ENCODE measurements at regions of chr19 and their contacts with region 1.

Region 1: DNA sequence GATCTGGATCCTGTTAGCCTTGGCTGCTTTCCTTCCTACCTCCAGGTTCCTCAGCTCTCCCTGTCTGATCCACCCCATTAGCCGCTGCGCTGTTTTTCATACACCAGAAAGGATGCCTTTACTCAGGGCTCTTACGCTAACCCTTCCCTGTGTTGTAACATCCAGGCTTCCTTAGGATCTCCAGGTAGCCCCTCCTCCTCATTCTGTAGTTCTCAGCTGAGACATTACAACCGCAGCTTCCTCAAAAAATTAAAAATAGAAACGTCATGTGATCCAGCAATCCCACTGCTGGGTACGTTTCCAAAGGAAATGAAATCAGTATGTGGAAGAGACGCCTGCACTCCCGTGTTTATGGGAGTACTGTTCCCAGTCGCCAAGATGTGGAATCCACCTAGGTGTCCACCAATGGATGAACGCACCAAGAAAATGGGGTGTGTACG is 18.4 kb upstream of the MYADM start:
- DNase-seq: peak in 1 of 2 donors; percentile 53
- ATAC-seq: peak; percentile 72 to 90 (median 80)
- H3K4me3 ChIP-seq: peak overlapping the region in 1 of 10 donors; percentile 6
- H3K27ac ChIP-seq: peak overlapping the region in 9 of 10 donors; percentile 29 to 81 (median 73)
- H3K4me1 ChIP-seq: peaks cover 0 to 60% (median 6%) of the 10 kb centered on the region in 9 donors
- H3K27me3 ChIP-seq: peaks cover 0 to 6% (median 0%) of the 10 kb centered on the region in 7 donors
- CTCF ChIP-seq: no peak

Region 2: DNA sequence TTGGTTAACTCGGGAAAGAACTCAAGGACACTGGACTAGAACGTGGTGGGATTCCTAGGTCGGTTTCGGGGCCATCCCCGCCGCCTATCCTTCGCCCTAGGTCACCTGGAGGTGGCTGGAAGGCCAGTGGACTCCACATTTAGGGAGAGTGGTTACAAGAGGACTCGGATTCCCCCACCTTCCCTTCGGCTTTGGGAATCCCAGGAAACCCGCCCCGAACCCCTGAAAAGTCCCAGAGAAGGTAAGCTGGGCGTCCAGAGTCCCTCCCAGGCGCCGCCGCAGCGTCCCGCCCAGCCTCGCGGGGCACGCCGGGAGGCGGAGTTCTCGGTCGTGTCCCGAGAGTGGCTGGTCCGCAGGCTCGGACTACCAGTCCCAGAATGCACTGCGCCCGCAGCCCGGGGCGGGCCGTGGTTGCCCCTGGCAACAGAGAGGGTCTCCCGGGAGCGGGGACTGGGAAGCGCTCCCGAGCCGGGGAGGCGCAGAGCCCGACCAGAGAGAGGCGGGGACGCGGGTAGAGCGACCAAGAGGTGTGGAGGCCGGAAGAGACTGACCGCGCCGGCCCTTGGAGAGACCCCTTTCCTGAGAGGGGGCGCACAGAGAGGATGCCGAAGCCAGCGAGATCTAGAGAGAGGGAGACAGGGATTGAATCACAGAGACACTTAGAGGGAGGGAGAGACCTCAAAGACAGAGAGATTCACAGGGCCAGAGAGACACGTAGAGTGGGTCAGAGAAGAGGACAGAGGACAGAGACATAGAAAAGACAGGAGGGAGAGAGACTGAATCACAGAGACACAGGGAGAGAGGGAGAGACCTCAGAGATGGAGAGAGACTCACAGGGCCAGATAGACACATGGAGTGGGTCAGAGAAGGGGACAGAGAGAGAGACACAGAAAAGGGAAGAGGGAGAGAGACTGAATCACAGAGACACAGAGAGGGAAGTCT is 30.2 kb after region 1 on chr19:
- intact Hi-C with region 1: loop called in 2 of 10 experiments (anchors 5 kb)
- DNase-seq: peak; percentile 95 to 96
- ATAC-seq: peak; percentile 96 to 100 (median 98)
- H3K4me3 ChIP-seq: peak overlapping the region; percentile 40 to 71 (median 60)
- H3K27ac ChIP-seq: peak overlapping the region in 6 of 10 donors; percentile 16 to 55 (median 22)
- H3K4me1 ChIP-seq: peaks cover 5 to 59% (median 22%) of the 10 kb centered on the region in 9 donors
- H3K27me3 ChIP-seq: peaks cover 15 to 49% (median 44%) of the 10 kb centered on the region in 7 donors
- CTCF ChIP-seq: no peak

Region 3: GRCh38 chr19:53906211-53907192 is 57.2 kb after region 1 on chr19:
- intact Hi-C with region 1: loop called in 2 of 10 experiments (anchors 10 kb)
- DNase-seq: peak; percentile 18 to 59
- ATAC-seq: peak in 7 of 8 donors; percentile 44 to 65 (median 58)
- H3K4me3 ChIP-seq: no peak overlapping the region
- H3K27ac ChIP-seq: no peak overlapping the region
- H3K4me1 ChIP-seq: peaks cover 0 to 26% (median 19%) of the 10 kb centered on the region in 9 donors
- H3K27me3 ChIP-seq: peaks cover 19 to 92% (median 69%) of the 10 kb centered on the region in 7 donors
- CTCF ChIP-seq: peak; percentile 51 to 93 (median 81)

Region 4: GRCh38 chr19:54023191-54023590 is 173.9 kb after region 1 on chr19:
- intact Hi-C with region 1: loop called in 5 of 10 experiments (anchors 2 to 5 kb)
- DNase-seq: no peak
- ATAC-seq: no peak
- H3K4me3 ChIP-seq: no peak overlapping the region
- H3K27ac ChIP-seq: peak overlapping the region in 1 of 10 donors; percentile 55
- H3K4me1 ChIP-seq: peaks cover 0 to 34% (median 0%) of the 10 kb centered on the region in 9 donors
- H3K27me3 ChIP-seq: peaks cover 0 to 51% (median 28%) of the 10 kb centered on the region in 7 donors
- CTCF ChIP-seq: no peak

Region 5: GRCh38 chr19:54029930-54030490 is 180.8 kb after region 1 on chr19:
- intact Hi-C with region 1: loop called in 3 of 10 experiments (anchors 1 to 5 kb)
- DNase-seq: peak; percentile 28 to 34
- ATAC-seq: peak in 2 of 8 donors; percentile 38 to 49
- H3K4me3 ChIP-seq: no peak overlapping the region
- H3K27ac ChIP-seq: no peak overlapping the region
- H3K4me1 ChIP-seq: peaks cover 0 to 8% (median 0%) of the 10 kb centered on the region in 9 donors
- H3K27me3 ChIP-seq: peaks cover 0 to 30% (median 16%) of the 10 kb centered on the region in 7 donors
- CTCF ChIP-seq: peak in 8 of 9 donors; percentile 35 to 63 (median 57)